Endothelial cell of umbilical vein (primary cell): ENCODE measurements at regions of chr9 and their contacts with region 1.

Region 1: GRCh38 chr9:124210697-124211096 is 47.1 kb upstream of the NEK6 start:
- DNase-seq: no peak
- H3K4me3 ChIP-seq: no peak overlapping the region
- H3K27ac ChIP-seq: no peak overlapping the region
- H3K4me1 ChIP-seq: peaks cover 31% of the 10 kb centered on the region
- H3K27me3 ChIP-seq: peaks cover 5 to 8% of the 10 kb centered on the region in 2 experiments
- CTCF ChIP-seq: no peak
- POLR2A ChIP-seq: no peak

Region 2: DNA sequence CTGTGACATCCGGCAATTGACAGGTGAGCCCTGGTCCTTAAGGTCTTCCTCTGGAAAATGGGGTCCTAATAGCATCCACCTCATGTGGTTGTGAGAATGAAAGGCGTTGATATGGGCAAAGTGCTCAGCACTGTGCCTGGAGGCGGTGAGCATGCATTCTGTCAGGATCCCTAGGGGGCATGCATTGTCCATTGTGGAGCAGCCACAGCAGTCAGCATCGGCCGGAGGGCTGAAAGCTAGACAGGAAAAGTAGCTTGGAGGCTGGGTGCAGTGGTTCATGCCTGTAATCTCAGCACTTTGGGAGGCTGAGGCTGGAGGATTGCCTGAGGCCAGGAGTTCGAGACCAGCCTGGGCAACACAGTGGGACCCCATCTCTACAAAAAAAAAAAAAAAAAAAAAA is 77.0 kb before region 1 on chr9:
- CTCF ChIA-PET with region 1: interaction called, 3 read pairs
- POLR2A ChIA-PET with region 1: no interaction called
- dilution Hi-C with region 1: no loop called
- intact Hi-C with region 1: loop called (anchors 5 kb)
- DNase-seq: peak; percentile 68
- H3K4me3 ChIP-seq: no peak overlapping the region
- H3K27ac ChIP-seq: no peak overlapping the region
- H3K4me1 ChIP-seq: peaks cover 7% of the 10 kb centered on the region
- H3K27me3 ChIP-seq: no peaks in the 10 kb centered on the region
- CTCF ChIP-seq: peak; percentile 36 to 64
- POLR2A ChIP-seq: no peak